GM23248 (cell line): ENCODE measurements at regions of chr9 and their contacts with region 1.

Region 1: DNA sequence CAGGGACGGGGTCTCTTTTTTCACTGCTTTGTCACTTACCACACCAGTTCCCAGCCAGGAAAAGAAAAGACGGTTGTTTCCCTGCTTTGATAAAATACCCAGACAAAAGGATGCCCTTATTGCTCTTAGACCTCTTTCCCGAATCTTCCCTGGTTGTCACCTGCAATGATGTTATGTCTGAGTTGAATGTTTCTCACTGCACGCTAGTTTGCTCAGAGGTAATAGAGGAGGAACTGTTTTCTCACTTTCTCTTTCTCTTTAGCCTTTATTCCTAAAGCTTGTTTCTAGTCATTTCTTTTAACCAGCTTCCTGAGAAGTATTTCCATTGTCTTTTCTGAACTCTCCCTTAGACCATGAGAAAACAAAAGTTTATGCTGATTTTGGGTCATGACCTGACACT is 32.9 kb downstream of the ACER2 start:
- DNase-seq: no peak
- H3K4me3 ChIP-seq: no peak overlapping the region
- H3K27ac ChIP-seq: no peak overlapping the region
- H3K4me1 ChIP-seq: no peaks in the 10 kb centered on the region
- H3K27me3 ChIP-seq: no peaks in the 10 kb centered on the region

Region 2: GRCh38 chr9:19085295-19085694 is 356.4 kb before region 1 on chr9:
- in situ Hi-C with region 1: loop called (anchors 25 kb)
- DNase-seq: peak; percentile 33
- H3K4me3 ChIP-seq: no peak overlapping the region
- H3K27ac ChIP-seq: no peak overlapping the region
- H3K4me1 ChIP-seq: no peaks in the 10 kb centered on the region
- H3K27me3 ChIP-seq: no peaks in the 10 kb centered on the region

Region 3: GRCh38 chr9:19513671-19514275 is 72.0 kb after region 1 on chr9:
- in situ Hi-C with region 1: no loop called
- DNase-seq: no peak
- H3K4me3 ChIP-seq: no peak overlapping the region
- H3K27ac ChIP-seq: no peak overlapping the region
- H3K4me1 ChIP-seq: no peaks in the 10 kb centered on the region
- H3K27me3 ChIP-seq: peaks cover 8% of the 10 kb centered on the region

Region 4: DNA sequence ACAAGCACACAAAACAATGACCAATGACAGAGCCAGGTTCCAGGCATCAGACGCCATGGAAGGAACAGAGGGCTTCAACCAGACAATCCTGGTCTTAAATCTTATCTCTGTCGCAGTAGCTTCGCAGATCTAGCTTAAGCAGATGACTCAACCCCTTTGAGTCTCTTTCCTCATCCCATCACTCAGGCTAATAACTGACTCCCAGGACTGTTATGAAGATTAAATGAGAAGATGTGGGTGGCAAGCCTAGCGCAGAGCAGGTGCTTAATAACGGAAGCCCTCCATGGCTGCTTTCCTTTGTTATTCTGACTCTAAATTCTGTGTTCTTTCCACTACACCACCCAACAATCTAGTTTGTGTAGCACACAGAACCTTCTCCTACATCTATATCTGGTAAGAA is 236.2 kb after region 1 on chr9:
- in situ Hi-C with region 1: no loop called
- DNase-seq: no peak
- H3K4me3 ChIP-seq: no peak overlapping the region
- H3K27ac ChIP-seq: no peak overlapping the region
- H3K4me1 ChIP-seq: no peaks in the 10 kb centered on the region
- H3K27me3 ChIP-seq: no peaks in the 10 kb centered on the region